ENCODE measurements at regions of chr17 and their contacts with region 1.

Region 1: GRCh38 chr17:64129764-64130558 is at the start of gene ERN1:
- DNase-seq: peak; percentile 93 to 96 (median 96)
- ATAC-seq: peak; percentile 95
- H3K4me3 ChIP-seq: peak within 1 kb of the TSS; percentile 84
- H3K27ac ChIP-seq: peak within 1 kb of the TSS; percentile 84
- H3K4me1 ChIP-seq: peaks cover 16 to 19% of the 10 kb centered on the region in 2 experiments; a peak in 4 of 5 replicates
- H3K27me3 ChIP-seq: no peaks in the 10 kb centered on the region
- CTCF ChIP-seq: no peak
- EP300 ChIP-seq: no peak; the same call in 1 of the 2 replicates
- POLR2A ChIP-seq: peak; percentile 88
- RAD21 ChIP-seq: peak in 1 of 2 experiments; percentile 15; a peak in 2 of 4 replicates
- polyA plus RNA-seq, gene ERN1: 2.1 to 4.3 TPM

Region 2: DNA sequence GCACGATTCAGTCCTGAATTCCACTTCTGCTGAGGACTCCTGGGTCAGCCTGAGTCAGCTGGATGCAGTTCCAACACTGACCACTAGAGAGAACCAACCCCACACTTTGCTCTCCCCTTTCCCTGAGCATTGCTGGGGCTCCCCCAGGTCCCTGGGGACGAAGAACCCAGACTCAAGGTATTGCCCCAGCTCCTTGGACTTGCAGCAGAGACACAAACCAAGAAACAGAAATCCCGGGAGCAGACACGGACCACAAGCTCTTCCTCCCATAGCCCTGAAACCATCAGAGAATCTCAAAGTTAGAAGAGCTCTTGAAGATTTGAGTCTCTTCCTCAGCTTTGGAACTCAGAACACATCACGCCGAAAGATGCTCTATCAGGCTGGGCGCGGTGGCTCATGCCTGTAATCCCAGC is 210.6 kb before region 1 on chr17:
- CTCF ChIA-PET with region 1: interaction called, 4 read pairs
- POLR2A ChIA-PET with region 1: no interaction called
- in situ Hi-C with region 1: loop called (anchors 5 kb)
- intact Hi-C with region 1: loop called (anchors 5 kb)
- DNase-seq: peak; percentile 75 to 81 (median 78)
- ATAC-seq: peak; percentile 96
- H3K4me3 ChIP-seq: no peak overlapping the region
- H3K27ac ChIP-seq: no peak overlapping the region
- H3K4me1 ChIP-seq: no peaks in the 10 kb centered on the region; a peak in 1 of 5 replicates
- H3K27me3 ChIP-seq: peaks cover 3 to 29% of the 10 kb centered on the region in 2 experiments; a peak in 4 of 5 replicates
- CTCF ChIP-seq: peak; percentile 88 to 92 (median 91)
- EP300 ChIP-seq: no peak
- POLR2A ChIP-seq: no peak
- RAD21 ChIP-seq: peak; percentile 87 to 94

Region 3: GRCh38 chr17:64036198-64036922 is 93.6 kb before region 1 on chr17:
- CTCF ChIA-PET with region 1: no interaction called
- POLR2A ChIA-PET with region 1: interaction called, 4 read pairs
- in situ Hi-C with region 1: loop called (anchors 10 kb)
- intact Hi-C with region 1: no loop called
- DNase-seq: peak in 3 of 4 experiments; percentile 33 to 46 (median 40)
- ATAC-seq: peak; percentile 89
- H3K4me3 ChIP-seq: no peak overlapping the region
- H3K27ac ChIP-seq: no peak overlapping the region
- H3K4me1 ChIP-seq: peaks cover 0 to 4% of the 10 kb centered on the region in 2 experiments; a peak in 3 of 5 replicates
- H3K27me3 ChIP-seq: no peaks in the 10 kb centered on the region
- CTCF ChIP-seq: peak; percentile 37 to 57 (median 53); a peak in 5 of 6 replicates
- EP300 ChIP-seq: no peak
- POLR2A ChIP-seq: no peak
- RAD21 ChIP-seq: peak in 1 of 2 experiments; percentile 30; a peak in 2 of 4 replicates

Region 4: DNA sequence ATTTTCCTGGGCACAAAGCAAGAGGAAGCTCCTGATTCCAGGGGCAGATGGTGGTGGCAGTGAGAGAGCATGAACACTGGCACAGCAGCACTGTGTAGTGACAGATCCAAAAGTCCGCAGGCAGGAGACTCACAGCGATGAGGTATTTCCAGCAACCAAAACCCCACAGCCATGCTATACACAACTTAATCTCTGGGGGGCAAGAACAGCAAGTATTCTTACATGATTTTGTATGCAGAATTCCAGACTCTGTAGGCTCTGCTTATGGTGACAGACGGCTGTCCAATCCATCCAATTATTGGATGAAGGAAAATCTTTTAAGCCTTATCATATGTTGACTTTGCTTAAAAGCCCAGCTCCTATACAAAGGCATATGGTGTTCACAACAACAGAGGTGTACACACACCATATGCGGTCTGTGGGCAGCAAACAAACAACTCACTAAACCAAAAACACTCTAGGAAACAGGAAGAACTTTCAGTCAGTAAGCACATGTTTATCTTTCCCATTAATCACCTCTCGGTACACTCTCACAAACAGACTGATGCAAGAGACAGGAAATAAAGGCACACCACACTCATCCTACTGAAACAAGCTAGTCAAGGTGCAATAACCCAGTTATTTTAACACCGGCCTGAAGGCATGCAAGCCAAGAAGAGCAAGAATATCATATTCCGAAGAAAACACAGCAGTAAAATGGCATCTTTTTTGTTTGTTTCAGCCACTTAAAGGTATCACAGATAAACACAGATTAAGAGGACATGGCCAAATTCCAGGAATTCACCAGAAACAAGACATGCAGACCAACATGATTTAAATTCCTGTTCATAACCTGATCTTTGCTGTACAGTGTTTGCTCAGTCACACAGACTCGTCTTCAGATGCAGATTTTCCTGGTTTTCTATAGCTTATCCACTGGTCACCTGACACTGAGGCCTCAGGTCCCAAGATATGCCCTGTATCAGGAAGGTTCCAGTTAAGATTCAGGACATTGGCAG is 47.9 kb before region 1 on chr17:
- CTCF ChIA-PET with region 1: no interaction called
- POLR2A ChIA-PET with region 1: interaction called, 8 read pairs
- in situ Hi-C with region 1: no loop called
- intact Hi-C with region 1: loop called (anchors 1 kb)
- DNase-seq: peak; percentile 33 to 64 (median 50)
- ATAC-seq: peak; percentile 85
- H3K4me3 ChIP-seq: no peak overlapping the region
- H3K27ac ChIP-seq: peak overlapping the region; percentile 77
- H3K4me1 ChIP-seq: peaks cover 26 to 48% of the 10 kb centered on the region in 2 experiments
- H3K27me3 ChIP-seq: no peaks in the 10 kb centered on the region
- CTCF ChIP-seq: 0 out of 6 replicates have a peak, but pooled peaks of 1 of the 3 experiments have one; percentile 13
- EP300 ChIP-seq: peak; percentile 98
- POLR2A ChIP-seq: peak; percentile 58; the same call in 1 of the 2 replicates
- RAD21 ChIP-seq: peak in 1 of 2 experiments; percentile 13; a peak in 3 of 4 replicates

Region 5: GRCh38 chr17:64240741-64241347 is 110.9 kb after region 1 on chr17:
- CTCF ChIA-PET with region 1: no interaction called
- POLR2A ChIA-PET with region 1: no interaction called
- in situ Hi-C with region 1: no loop called
- intact Hi-C with region 1: no loop called
- DNase-seq: peak in 1 of 4 experiments; percentile 34
- ATAC-seq: peak; percentile 50
- H3K4me3 ChIP-seq: no peak overlapping the region
- H3K27ac ChIP-seq: peak overlapping the region; percentile 34; the same call in 1 of the 3 replicates
- H3K4me1 ChIP-seq: peaks cover 16 to 24% of the 10 kb centered on the region in 2 experiments
- H3K27me3 ChIP-seq: no peaks in the 10 kb centered on the region
- CTCF ChIP-seq: no peak
- EP300 ChIP-seq: no peak
- POLR2A ChIP-seq: no peak
- RAD21 ChIP-seq: no peak

Region 6: GRCh38 chr17:64281962-64282727 is 152.2 kb after region 1 on chr17:
- CTCF ChIA-PET with region 1: interaction called, 5 read pairs
- POLR2A ChIA-PET with region 1: interaction called, 3 read pairs
- in situ Hi-C with region 1: no loop called
- intact Hi-C with region 1: loop called (anchors 5 kb)
- DNase-seq: peak; percentile 73 to 81 (median 80)
- ATAC-seq: peak; percentile 80
- H3K4me3 ChIP-seq: no peak overlapping the region
- H3K27ac ChIP-seq: no peak overlapping the region
- H3K4me1 ChIP-seq: peaks cover 0 to 3% of the 10 kb centered on the region in 2 experiments; a peak in 1 of 5 replicates
- H3K27me3 ChIP-seq: no peaks in the 10 kb centered on the region
- CTCF ChIP-seq: peak; percentile 79 to 92 (median 88)
- EP300 ChIP-seq: no peak
- POLR2A ChIP-seq: no peak
- RAD21 ChIP-seq: peak; percentile 84